ENCODE measurements at regions of chr3 and their contacts with region 1.

Region 1: GRCh38 chr3:71305231-71306206 is 278.0 kb downstream of the FOXP1 start:
- DNase-seq: peak in 1 of 2 donors; percentile 20
- H3K4me3 ChIP-seq: peak overlapping the region; percentile 6 to 14
- H3K27ac ChIP-seq: peak overlapping the region; percentile 39 to 49
- H3K4me1 ChIP-seq: no peaks in the 10 kb centered on the region
- H3K27me3 ChIP-seq: no peaks in the 10 kb centered on the region
- CTCF ChIP-seq: no peak
- POLR2A ChIP-seq: no peak

Region 2: DNA sequence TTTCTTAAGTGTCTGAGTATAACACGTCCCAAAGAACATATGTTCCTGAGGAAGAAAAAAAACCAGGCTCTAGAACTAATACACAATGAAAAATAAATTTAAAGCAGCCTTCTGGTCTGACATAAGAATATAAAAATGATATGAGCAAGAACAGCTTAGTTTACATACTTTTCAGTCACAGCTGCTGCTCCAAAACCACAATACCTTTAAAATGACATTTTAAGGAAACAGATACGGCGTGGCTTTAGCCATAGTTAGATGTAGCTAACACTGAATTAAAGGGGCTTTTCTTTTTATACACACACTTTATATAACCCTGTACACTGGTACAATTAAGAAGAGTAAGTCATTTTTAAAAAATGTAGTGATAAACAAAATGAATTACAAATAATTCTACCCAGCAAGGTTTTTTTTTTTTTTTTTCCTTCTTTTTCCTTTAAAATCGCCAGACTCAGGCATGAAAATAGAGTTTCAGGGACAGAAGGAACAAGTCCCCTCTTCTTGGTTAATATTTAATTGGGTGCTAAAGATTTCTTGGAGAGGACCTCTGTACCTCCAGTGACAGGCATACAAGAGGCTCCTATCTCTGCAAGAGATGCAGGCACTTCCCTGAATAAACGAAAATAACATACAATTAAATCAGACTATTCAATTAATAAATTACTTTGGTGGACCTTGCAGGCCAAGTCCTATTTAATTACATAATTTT is 12.4 kb after region 1 on chr3:
- intact Hi-C with region 1: no loop called
- DNase-seq: no peak
- H3K4me3 ChIP-seq: no peak overlapping the region
- H3K27ac ChIP-seq: peak overlapping the region; percentile 22 to 32
- H3K4me1 ChIP-seq: no peaks in the 10 kb centered on the region
- H3K27me3 ChIP-seq: no peaks in the 10 kb centered on the region
- CTCF ChIP-seq: no peak
- POLR2A ChIP-seq: no peak

Region 3: DNA sequence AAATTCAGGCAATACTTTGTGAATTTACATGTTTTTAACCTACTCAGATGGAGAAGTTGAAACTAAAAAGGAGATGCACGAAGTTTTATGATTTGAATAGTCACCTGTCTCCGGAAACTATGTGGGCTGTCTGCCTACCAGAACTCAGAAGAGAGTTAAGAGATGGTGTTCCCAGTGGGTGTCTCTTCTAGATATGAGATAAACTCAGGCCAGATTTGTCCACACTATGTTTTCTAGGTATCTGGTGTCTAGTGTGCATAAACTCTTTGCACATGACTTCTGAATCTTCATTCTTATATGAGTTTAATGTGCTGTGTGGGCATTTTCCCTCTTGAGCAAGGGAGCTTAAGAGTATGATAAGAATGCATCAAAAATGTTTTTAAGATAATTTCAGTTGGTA is 55.2 kb after region 1 on chr3:
- intact Hi-C with region 1: no loop called
- DNase-seq: no peak
- H3K4me3 ChIP-seq: no peak overlapping the region
- H3K27ac ChIP-seq: no peak overlapping the region
- H3K4me1 ChIP-seq: no peaks in the 10 kb centered on the region
- H3K27me3 ChIP-seq: no peaks in the 10 kb centered on the region
- CTCF ChIP-seq: no peak
- POLR2A ChIP-seq: no peak

Region 4: DNA sequence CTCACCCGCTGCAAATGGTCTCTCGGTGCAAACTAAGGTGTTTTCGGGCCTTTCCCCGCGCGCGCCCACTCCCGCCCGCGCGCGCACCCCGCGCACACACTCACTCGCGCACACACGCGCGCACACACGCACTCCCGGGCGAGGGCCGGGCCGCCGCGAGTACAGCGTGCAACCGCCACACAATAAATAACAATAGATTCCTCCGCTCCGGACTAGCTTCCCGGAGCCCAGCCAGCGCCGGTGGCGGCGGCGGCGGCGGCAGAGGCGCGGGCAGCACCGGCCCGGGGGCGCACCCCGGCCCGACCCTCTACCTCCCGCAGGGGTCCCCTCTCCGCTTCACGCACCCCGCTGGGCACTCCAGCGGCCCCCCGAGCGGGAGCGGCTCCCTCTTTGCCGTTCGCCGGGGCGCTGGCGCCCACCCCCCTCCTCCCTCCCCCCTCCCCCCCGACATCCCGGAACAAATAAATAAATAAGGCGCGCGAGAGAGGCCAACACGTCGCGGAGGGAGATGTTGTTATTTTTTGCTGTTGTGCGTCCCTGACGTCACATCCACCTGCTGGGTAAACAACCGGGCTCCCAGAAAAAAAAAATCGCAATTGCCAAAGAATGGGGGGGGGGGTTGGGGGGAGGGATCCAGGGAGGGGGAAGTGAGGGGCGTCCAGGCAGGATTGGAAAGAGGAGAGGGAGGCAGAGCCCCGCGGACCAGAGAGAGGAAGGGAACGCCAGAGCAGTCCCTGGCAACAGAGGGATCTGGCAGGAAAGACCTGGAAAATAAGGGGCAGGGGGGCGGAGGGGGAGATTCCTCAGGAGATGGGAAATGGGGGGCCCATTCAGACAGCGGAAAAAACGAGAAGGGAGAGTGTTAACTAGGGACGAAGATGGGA is 278.3 kb after region 1 on chr3 and contains the start of gene FOXP1:
- intact Hi-C with region 1: loop called (anchors 5 kb)
- DNase-seq: peak; percentile 68 to 69
- H3K4me3 ChIP-seq: peak within 1 kb of the TSS; percentile 67 to 69
- H3K27ac ChIP-seq: peak within 1 kb of the TSS; percentile 98 to 99
- H3K4me1 ChIP-seq: no peaks in the 10 kb centered on the region
- H3K27me3 ChIP-seq: no peaks in the 10 kb centered on the region
- CTCF ChIP-seq: no peak
- POLR2A ChIP-seq: peak; percentile 26 to 57
- total RNA-seq, gene FOXP1: 54.2 to 152 (median 129) TPM

Region 5: GRCh38 chr3:71641674-71642073 is 336.2 kb after region 1 on chr3:
- intact Hi-C with region 1: no loop called
- DNase-seq: no peak
- H3K4me3 ChIP-seq: no peak overlapping the region
- H3K27ac ChIP-seq: no peak overlapping the region
- H3K4me1 ChIP-seq: no peaks in the 10 kb centered on the region
- H3K27me3 ChIP-seq: no peaks in the 10 kb centered on the region
- CTCF ChIP-seq: no peak
- POLR2A ChIP-seq: no peak